Calu3 (cell line): ENCODE measurements at regions of chr16 and their contacts with region 1.

Region 1: GRCh38 chr16:63461248-63461841 is 1425.1 kb upstream of the CDH8 start:
- DNase-seq: no peak
- H3K4me3 Mint-ChIP-seq: no peak overlapping the region
- H3K27ac Mint-ChIP-seq: no peak overlapping the region
- H3K4me1 Mint-ChIP-seq: no peaks in the 10 kb centered on the region
- H3K27me3 Mint-ChIP-seq: no peaks in the 10 kb centered on the region
- CTCF ChIP-seq: no peak

Region 2: GRCh38 chr16:62445909-62446308 is 1015.4 kb before region 1 on chr16:
- CTCF ChIA-PET with region 1: no interaction called
- intact Hi-C with region 1: no loop called
- DNase-seq: no peak
- H3K4me3 Mint-ChIP-seq: no peak overlapping the region
- H3K27ac Mint-ChIP-seq: no peak overlapping the region
- H3K4me1 Mint-ChIP-seq: no peaks in the 10 kb centered on the region
- H3K27me3 Mint-ChIP-seq: no peaks in the 10 kb centered on the region
- CTCF ChIP-seq: no peak

Region 3: DNA sequence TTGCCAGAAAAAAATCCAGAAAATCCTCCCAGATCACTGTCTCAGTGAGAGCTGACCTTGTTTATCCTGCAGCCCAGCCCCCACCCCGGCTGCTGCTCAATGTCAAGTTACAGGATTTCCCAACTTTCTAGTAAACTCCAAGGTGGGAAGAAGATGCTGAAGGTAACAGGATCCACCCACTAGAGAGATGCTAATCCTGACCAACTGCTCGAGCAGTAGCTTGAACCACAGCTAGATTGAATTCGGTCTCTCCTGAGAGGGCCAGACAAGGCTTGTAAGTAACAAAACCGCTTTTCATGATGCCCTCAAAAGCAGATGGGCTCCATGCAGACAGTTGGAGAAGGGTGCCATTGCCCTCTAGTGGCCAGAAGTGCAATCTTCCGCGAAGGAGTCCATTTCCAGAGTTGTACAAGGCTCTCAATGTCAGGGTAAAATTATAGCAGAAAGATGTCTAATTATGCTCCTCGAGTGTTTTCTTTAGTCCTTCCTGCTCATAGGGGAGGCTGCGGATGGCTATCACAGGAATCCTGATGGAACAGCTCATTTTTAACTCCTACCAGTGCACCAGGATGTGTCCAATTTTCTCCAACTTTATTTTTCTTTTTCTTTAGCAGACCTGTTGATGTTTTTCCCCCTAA is 1656.6 kb after region 1 on chr16:
- CTCF ChIA-PET with region 1: no interaction called
- intact Hi-C with region 1: loop called (anchors 5 kb)
- DNase-seq: peak; percentile 54
- H3K4me3 Mint-ChIP-seq: no peak overlapping the region
- H3K27ac Mint-ChIP-seq: no peak overlapping the region
- H3K4me1 Mint-ChIP-seq: no peaks in the 10 kb centered on the region
- H3K27me3 Mint-ChIP-seq: no peaks in the 10 kb centered on the region
- CTCF ChIP-seq: peak; percentile 85